B cell (primary cell): ENCODE measurements at regions of chr1 and their contacts with region 1.

Region 1: GRCh38 chr1:26035959-26036755 is 9.8 kb downstream of the SLC30A2 start:
- DNase-seq: peak; percentile 88
- ATAC-seq: peak; percentile 74
- H3K4me3 ChIP-seq: peak overlapping the region; percentile 41 to 96 (median 95)
- H3K4me3 Mint-ChIP-seq: peak overlapping the region; percentile 96
- H3K27ac ChIP-seq: peak overlapping the region in 1 of 2 donors; percentile 67
- H3K27ac Mint-ChIP-seq: peak overlapping the region; percentile 89
- H3K4me1 ChIP-seq: peaks cover 10 to 13% of the 10 kb centered on the region in 2 donors
- H3K4me1 Mint-ChIP-seq: peaks cover 13% of the 10 kb centered on the region
- H3K27me3 ChIP-seq: peaks cover 0 to 22% (median 4%) of the 10 kb centered on the region in 4 experiments
- H3K27me3 Mint-ChIP-seq: peaks cover 6% of the 10 kb centered on the region
- CTCF ChIP-seq: peak; percentile 99

Region 2: DNA sequence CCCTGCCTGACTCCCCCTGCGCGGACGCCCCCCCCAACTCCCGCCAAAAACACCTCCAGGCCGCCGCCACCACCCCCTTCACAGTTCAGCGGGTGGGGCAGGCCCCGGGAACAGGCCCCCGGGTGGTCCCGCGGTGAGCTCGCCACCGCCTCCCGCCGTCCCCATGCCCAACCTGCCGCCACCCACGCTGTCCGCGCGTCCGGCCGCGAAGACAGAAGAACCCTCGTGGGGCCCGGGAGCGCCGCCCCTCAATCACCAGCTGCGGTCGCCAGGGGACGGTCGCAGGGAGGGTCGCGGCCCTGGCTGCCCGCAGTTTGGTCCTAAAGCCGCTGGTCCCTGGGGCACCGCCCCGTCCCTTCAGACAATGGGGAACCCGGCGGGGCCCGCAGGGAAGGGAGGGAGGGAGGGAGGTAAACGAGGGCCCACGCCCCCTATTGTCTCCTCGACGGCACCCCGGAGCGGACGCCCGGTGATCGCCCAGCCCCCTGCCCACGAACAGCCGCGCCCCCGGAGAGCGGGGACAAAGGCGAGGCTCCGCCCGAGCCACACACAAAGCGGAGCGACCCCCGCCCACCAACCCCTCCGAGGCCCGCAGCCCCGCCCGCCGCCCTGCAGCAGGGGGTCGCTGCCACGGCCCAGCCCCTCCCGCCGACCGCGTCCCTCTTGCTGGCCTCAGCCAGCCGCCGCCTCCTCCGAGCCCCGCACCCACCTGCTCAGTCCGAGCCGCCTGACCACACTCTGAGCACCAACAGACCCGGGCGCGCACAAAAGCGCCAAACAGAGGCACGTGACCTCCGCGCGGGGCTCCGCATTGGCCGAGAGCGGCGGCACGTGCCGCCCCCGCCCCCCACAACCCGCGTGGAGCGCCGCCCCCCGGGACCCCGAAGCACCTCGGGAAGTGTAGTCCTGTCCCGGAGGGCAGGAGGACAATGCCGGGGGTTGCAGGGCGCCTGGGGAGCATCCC is 130.2 kb before region 1 on chr1 and contains the start of gene STMN1:
- CTCF ChIA-PET with region 1: no interaction called
- POLR2A ChIA-PET with region 1: no interaction called
- intact Hi-C with region 1: loop called (anchors 1 kb)
- DNase-seq: peak; percentile 93
- ATAC-seq: peak; percentile 75
- H3K4me3 ChIP-seq: peak within 1 kb of the TSS; percentile 62 to 99 (median 63)
- H3K4me3 Mint-ChIP-seq: peak within 1 kb of the TSS; percentile 88
- H3K27ac ChIP-seq: peak within 1 kb of the TSS; percentile 62 to 65
- H3K27ac Mint-ChIP-seq: peak within 1 kb of the TSS; percentile 94
- H3K4me1 ChIP-seq: peaks cover 6 to 22% of the 10 kb centered on the region in 2 donors
- H3K4me1 Mint-ChIP-seq: peaks cover 14% of the 10 kb centered on the region
- H3K27me3 ChIP-seq: no peaks in the 10 kb centered on the region
- H3K27me3 Mint-ChIP-seq: no peaks in the 10 kb centered on the region
- CTCF ChIP-seq: no peak
- total RNA-seq, gene STMN1: 42.2 and 48.0 TPM in 2 replicates

Region 3: DNA sequence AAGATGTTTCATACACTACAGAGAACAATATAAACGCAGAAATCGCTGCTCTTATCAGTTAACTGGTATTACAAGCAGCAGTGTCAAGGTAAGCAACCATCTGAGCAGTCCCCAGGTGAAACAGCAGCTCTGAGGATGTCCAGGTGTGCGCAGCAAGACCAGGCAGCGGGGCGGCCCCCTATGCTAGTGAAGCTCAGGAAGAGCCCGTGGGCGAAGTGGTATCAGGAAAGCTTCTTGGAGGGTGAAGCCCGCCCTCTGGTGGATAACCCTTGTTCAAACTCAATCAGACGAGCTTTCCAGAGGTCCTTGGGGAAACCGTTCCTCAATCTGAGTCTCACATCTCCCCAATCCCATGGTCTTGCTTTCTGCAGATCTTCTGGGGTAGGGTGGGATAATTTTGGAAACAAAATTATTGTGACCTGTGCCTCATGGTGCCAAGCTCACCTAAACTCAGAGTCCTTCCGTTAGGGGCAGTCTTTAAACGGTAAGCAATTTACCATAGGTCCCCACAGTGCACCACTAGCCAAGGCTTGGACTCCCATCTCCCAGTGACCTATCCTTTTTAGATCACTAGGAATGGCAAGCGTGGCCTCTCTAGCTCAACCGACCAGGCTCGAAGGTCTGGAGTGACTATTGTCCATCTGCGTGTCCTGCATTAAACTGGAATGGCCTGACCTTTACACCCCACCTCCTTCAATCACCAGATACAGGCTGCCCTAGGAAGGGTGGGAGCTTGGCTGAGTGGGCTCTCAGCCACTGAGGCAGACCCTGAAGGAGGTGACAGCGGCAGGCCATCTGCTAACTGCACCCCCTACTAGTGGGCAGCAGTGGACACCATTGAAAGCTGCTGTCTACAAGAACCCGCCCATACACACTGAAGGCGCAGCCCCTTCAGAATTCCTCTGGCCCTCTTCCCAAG is 109.1 kb after region 1 on chr1:
- CTCF ChIA-PET with region 1: interaction called, 7 read pairs
- POLR2A ChIA-PET with region 1: no interaction called
- intact Hi-C with region 1: loop called (anchors 1 kb)
- DNase-seq: peak; percentile 79
- ATAC-seq: peak; percentile 65
- H3K4me3 ChIP-seq: no peak overlapping the region
- H3K4me3 Mint-ChIP-seq: no peak overlapping the region
- H3K27ac ChIP-seq: no peak overlapping the region
- H3K27ac Mint-ChIP-seq: no peak overlapping the region
- H3K4me1 ChIP-seq: peaks cover 4 to 6% of the 10 kb centered on the region in 2 donors
- H3K4me1 Mint-ChIP-seq: peaks cover 3% of the 10 kb centered on the region
- H3K27me3 ChIP-seq: peaks cover 0 to 6% (median 0%) of the 10 kb centered on the region in 4 experiments
- H3K27me3 Mint-ChIP-seq: peaks cover 14% of the 10 kb centered on the region
- CTCF ChIP-seq: peak; percentile 90

Region 4: DNA sequence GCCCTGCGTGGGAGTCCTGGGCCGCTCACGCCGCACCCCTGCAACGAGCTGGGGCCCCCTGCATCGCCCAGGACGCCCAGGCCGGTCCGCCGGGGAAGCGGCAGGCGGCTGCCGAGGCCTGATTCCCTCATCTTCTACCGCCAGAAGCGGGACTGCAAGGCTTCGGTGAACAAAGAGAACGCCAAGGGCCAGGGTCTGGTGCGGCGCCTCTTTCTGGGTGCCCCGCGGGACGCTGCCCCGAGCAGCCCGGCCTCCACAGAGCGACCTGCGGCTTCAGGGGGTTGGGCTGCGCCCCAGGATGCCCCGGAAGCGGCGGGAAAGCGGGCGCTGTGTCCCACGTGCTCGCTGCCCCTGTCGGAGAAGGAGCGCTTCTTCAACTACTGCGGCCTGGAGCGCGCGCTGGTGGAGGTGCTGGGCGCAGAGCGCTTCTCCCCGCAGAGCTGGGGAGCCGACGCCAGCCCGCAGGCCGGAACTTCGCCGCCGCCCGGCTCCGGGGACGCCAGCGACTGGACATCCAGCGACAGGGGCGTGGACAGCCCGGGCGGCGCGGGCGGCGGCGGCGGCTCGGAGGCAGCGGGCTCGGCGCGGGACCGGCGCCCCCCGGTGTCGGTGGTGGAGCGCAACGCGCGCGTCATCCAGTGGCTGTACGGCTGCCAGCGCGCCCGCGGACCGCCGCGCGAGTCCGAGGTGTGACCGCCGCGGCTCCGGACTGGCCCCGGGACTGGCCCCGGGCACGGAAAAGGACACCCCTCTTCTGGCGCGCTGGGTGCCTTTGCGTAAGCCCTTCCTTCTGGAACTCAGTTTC is 125.5 kb after region 1 on chr1:
- CTCF ChIA-PET with region 1: no interaction called
- POLR2A ChIA-PET with region 1: no interaction called
- intact Hi-C with region 1: loop called (anchors 5 kb)
- DNase-seq: peak; percentile 69
- ATAC-seq: peak; percentile 45
- H3K4me3 ChIP-seq: peak overlapping the region in 3 of 5 experiments; percentile 33 to 47 (median 39)
- H3K4me3 Mint-ChIP-seq: peak overlapping the region; percentile 75
- H3K27ac ChIP-seq: no peak overlapping the region
- H3K27ac Mint-ChIP-seq: no peak overlapping the region
- H3K4me1 ChIP-seq: peaks cover 25% of the 10 kb centered on the region in 2 donors
- H3K4me1 Mint-ChIP-seq: peaks cover 13% of the 10 kb centered on the region
- H3K27me3 ChIP-seq: peaks cover 0 to 64% (median 23%) of the 10 kb centered on the region in 4 experiments
- H3K27me3 Mint-ChIP-seq: peaks cover 27% of the 10 kb centered on the region
- CTCF ChIP-seq: no peak